H1 (cell line): ENCODE measurements at regions of chr1 and their contacts with region 1.

Region 1: GRCh38 chr1:155017041-155017945 is 14.7 kb downstream of the ZBTB7B start:
- DNase-seq: peak; percentile 89 to 92
- H3K4me3 ChIP-seq: peak overlapping the region; percentile 21 to 60 (median 39); a peak in 7 of 8 replicates
- H3K27ac ChIP-seq: peak overlapping the region; percentile 71; the same call in 1 of the 2 replicates
- H3K4me1 ChIP-seq: peaks cover 8 to 23% (median 16%) of the 10 kb centered on the region in 4 experiments
- H3K27me3 ChIP-seq: peaks cover 0 to 2% (median 0%) of the 10 kb centered on the region in 4 experiments; a peak in 1 of 7 replicates
- CTCF ChIP-seq: peak in 2 of 3 experiments; percentile 99 to 100; a peak in 3 of 4 replicates
- EP300 ChIP-seq: peak in 1 of 2 experiments; percentile 78; a peak in 2 of 3 replicates
- POLR2A ChIP-seq: peak in 1 of 2 experiments; percentile 20; a peak in 1 of 3 replicates
- RAD21 ChIP-seq: peak; percentile 65 to 72

Region 2: GRCh38 chr1:154974063-154974807 is 43.1 kb before region 1 on chr1 and contains the start of gene CKS1B:
- CTCF ChIA-PET with region 1: interaction called, 5 read pairs
- POLR2A ChIA-PET with region 1: interaction called, 120 read pairs
- DNase-seq: peak; percentile 91 to 98
- H3K4me3 ChIP-seq: peak within 1 kb of the TSS; percentile 87 to 99 (median 96)
- H3K27ac ChIP-seq: peak within 1 kb of the TSS; percentile 95
- H3K4me1 ChIP-seq: peaks cover 3 to 13% (median 11%) of the 10 kb centered on the region in 4 experiments; a peak in 6 of 7 replicates
- H3K27me3 ChIP-seq: no peaks in the 10 kb centered on the region
- CTCF ChIP-seq: no peak
- EP300 ChIP-seq: no peak
- POLR2A ChIP-seq: peak; percentile 46 to 82
- RAD21 ChIP-seq: no peak
- total RNA-seq, gene CKS1B: 284 and 294 TPM in 2 replicates

Region 3: GRCh38 chr1:154992721-154993571 is 24.3 kb before region 1 on chr1:
- CTCF ChIA-PET with region 1: interaction called, 258 read pairs
- POLR2A ChIA-PET with region 1: interaction called, 29 read pairs
- DNase-seq: peak in 1 of 2 experiments; percentile 58
- H3K4me3 ChIP-seq: no peak overlapping the region
- H3K27ac ChIP-seq: peak overlapping the region; percentile 58; the same call in 1 of the 2 replicates
- H3K4me1 ChIP-seq: peaks cover 0 to 7% (median 3%) of the 10 kb centered on the region in 4 experiments; a peak in 3 of 7 replicates
- H3K27me3 ChIP-seq: no peaks in the 10 kb centered on the region
- CTCF ChIP-seq: peak; percentile 45 to 51 (median 48)
- EP300 ChIP-seq: no peak
- POLR2A ChIP-seq: peak; percentile 51 to 61
- RAD21 ChIP-seq: peak; percentile 12 to 33; a peak in 2 of 4 replicates

Region 4: GRCh38 chr1:155029513-155030242 is 12.4 kb after region 1 on chr1:
- CTCF ChIA-PET with region 1: interaction called, 30 read pairs
- POLR2A ChIA-PET with region 1: interaction called, 60 read pairs
- DNase-seq: no peak
- H3K4me3 ChIP-seq: no peak overlapping the region
- H3K27ac ChIP-seq: no peak overlapping the region
- H3K4me1 ChIP-seq: peaks cover 0 to 5% (median 0%) of the 10 kb centered on the region in 4 experiments; a peak in 2 of 7 replicates
- H3K27me3 ChIP-seq: peaks cover 0 to 3% (median 1%) of the 10 kb centered on the region in 4 experiments; a peak in 1 of 7 replicates
- CTCF ChIP-seq: no peak
- EP300 ChIP-seq: no peak
- POLR2A ChIP-seq: no peak
- RAD21 ChIP-seq: no peak

Region 5: GRCh38 chr1:155038602-155039307 is 21.5 kb after region 1 on chr1:
- CTCF ChIA-PET with region 1: interaction called, 354 read pairs
- POLR2A ChIA-PET with region 1: interaction called, 60 read pairs
- DNase-seq: no peak
- H3K4me3 ChIP-seq: no peak overlapping the region
- H3K27ac ChIP-seq: no peak overlapping the region
- H3K4me1 ChIP-seq: no peaks in the 10 kb centered on the region
- H3K27me3 ChIP-seq: peaks cover 0 to 2% (median 0%) of the 10 kb centered on the region in 4 experiments; a peak in 3 of 7 replicates
- CTCF ChIP-seq: no peak
- EP300 ChIP-seq: no peak
- POLR2A ChIP-seq: no peak
- RAD21 ChIP-seq: no peak

Region 6: DNA sequence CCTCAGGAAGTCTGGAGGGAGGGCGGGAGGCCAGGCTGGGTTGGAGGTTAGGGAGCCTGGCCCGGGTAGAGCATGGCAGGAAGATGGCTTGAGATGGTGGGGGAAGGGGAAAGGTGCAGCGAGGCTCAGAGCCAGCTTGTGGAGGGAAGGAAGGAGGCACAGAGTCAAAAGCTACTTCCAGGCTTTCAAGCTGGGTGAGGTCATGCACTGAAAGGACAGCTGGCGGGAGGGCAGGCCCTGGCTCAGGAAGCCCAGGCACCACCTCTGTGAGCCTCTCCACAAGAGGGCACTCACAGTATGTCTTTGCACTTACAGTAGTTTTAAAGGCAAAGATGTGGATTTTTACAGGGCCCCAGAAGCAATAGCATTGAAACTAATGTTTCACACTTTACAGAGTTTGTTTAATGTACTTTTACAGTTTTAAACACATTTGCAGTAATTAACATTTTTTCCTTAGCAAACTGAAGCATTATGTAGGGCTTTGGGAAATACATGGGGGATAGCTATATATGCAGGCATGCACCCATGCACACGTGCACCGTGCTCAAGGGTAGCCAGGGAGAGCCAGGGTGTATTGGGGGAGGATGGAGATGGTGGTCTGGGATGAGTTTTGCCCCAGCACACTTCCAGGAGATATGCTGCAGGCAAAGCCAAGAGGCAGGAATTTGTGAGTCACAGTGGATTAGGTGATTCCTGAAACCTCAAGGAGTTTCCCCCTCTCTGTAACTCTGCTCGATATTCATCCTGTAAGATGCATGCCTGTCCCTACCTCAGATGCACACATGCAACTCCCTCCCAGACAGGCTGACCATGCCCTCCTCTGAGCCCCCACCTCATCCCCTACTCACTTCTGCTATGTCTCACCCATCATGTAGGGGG is 27.8 kb after region 1 on chr1:
- CTCF ChIA-PET with region 1: interaction called, 354 read pairs
- POLR2A ChIA-PET with region 1: interaction called, 11 read pairs
- DNase-seq: peak; percentile 67 to 73
- H3K4me3 ChIP-seq: no peak overlapping the region
- H3K27ac ChIP-seq: no peak overlapping the region
- H3K4me1 ChIP-seq: peaks cover 4 to 15% (median 5%) of the 10 kb centered on the region in 4 experiments; a peak in 6 of 7 replicates
- H3K27me3 ChIP-seq: no peaks in the 10 kb centered on the region; a peak in 2 of 7 replicates
- CTCF ChIP-seq: peak; percentile 76 to 86 (median 79)
- EP300 ChIP-seq: no peak
- POLR2A ChIP-seq: no peak
- RAD21 ChIP-seq: peak; percentile 70 to 76

Region 7: GRCh38 chr1:155050560-155051341 is 33.5 kb after region 1 on chr1 and contains the start of gene ADAM15:
- CTCF ChIA-PET with region 1: interaction called, 354 read pairs
- POLR2A ChIA-PET with region 1: interaction called, 11 read pairs
- DNase-seq: peak in 1 of 2 experiments; percentile 95
- H3K4me3 ChIP-seq: peak within 1 kb of the TSS; percentile 32 to 76 (median 62)
- H3K27ac ChIP-seq: no peak within 1 kb of the TSS
- H3K4me1 ChIP-seq: peaks cover 4 to 28% (median 10%) of the 10 kb centered on the region in 4 experiments; a peak in 6 of 7 replicates
- H3K27me3 ChIP-seq: peaks cover 0 to 18% (median 12%) of the 10 kb centered on the region in 4 experiments; a peak in 5 of 7 replicates
- CTCF ChIP-seq: peak; percentile 94 to 98 (median 97)
- EP300 ChIP-seq: no peak
- POLR2A ChIP-seq: no peak
- RAD21 ChIP-seq: peak; percentile 51 to 65
- total RNA-seq, gene ADAM15: 32.2 and 32.9 TPM in 2 replicates

Region 8: GRCh38 chr1:155105604-155106022 is 88.3 kb after region 1 on chr1:
- CTCF ChIA-PET with region 1: no interaction called
- POLR2A ChIA-PET with region 1: no interaction called
- DNase-seq: no peak
- H3K4me3 ChIP-seq: no peak overlapping the region
- H3K27ac ChIP-seq: no peak overlapping the region
- H3K4me1 ChIP-seq: no peaks in the 10 kb centered on the region
- H3K27me3 ChIP-seq: no peaks in the 10 kb centered on the region
- CTCF ChIP-seq: no peak
- EP300 ChIP-seq: no peak
- POLR2A ChIP-seq: no peak
- RAD21 ChIP-seq: no peak

Region 9: GRCh38 chr1:155208541-155209311 is 191.4 kb after region 1 on chr1 and contains the start of gene MTX1:
- CTCF ChIA-PET with region 1: no interaction called
- POLR2A ChIA-PET with region 1: no interaction called
- DNase-seq: peak in 1 of 2 experiments; percentile 90
- H3K4me3 ChIP-seq: peak within 1 kb of the TSS; percentile 86 to 95 (median 94)
- H3K27ac ChIP-seq: peak within 1 kb of the TSS; percentile 85
- H3K4me1 ChIP-seq: peaks cover 3 to 20% (median 12%) of the 10 kb centered on the region in 4 experiments
- H3K27me3 ChIP-seq: peaks cover 0 to 3% (median 0%) of the 10 kb centered on the region in 4 experiments; a peak in 2 of 7 replicates
- CTCF ChIP-seq: no peak
- EP300 ChIP-seq: peak in 1 of 2 experiments; percentile 86; a peak in 1 of 3 replicates
- POLR2A ChIP-seq: peak in 1 of 2 experiments; percentile 74; a peak in 2 of 3 replicates
- RAD21 ChIP-seq: no peak
- total RNA-seq, gene MTX1: 47.9 and 55.0 TPM in 2 replicates